ENCODE measurements at regions of chr6 and their contacts with region 1.

Region 1: GRCh38 chr6:71107911-71108420 is 151.1 kb upstream of the B3GAT2 start:
- DNase-seq: peak; percentile 29
- H3K4me3 ChIP-seq: no peak overlapping the region
- H3K27ac ChIP-seq: no peak overlapping the region
- H3K4me1 ChIP-seq: no peaks in the 10 kb centered on the region
- H3K27me3 ChIP-seq: peaks cover 14% of the 10 kb centered on the region
- CTCF ChIP-seq: no peak

Region 2: GRCh38 chr6:69917834-69918233 is 1190.1 kb before region 1 on chr6:
- CTCF ChIA-PET with region 1: no interaction called
- POLR2A ChIA-PET with region 1: interaction called, 13 read pairs
- intact Hi-C with region 1: no loop called
- DNase-seq: peak; percentile 93
- H3K4me3 ChIP-seq: no peak overlapping the region
- H3K27ac ChIP-seq: no peak overlapping the region
- H3K4me1 ChIP-seq: peaks cover 20% of the 10 kb centered on the region
- H3K27me3 ChIP-seq: no peaks in the 10 kb centered on the region
- CTCF ChIP-seq: no peak

Region 3: GRCh38 chr6:71124340-71124739 is 16.4 kb after region 1 on chr6:
- CTCF ChIA-PET with region 1: no interaction called
- POLR2A ChIA-PET with region 1: no interaction called
- intact Hi-C with region 1: no loop called
- DNase-seq: peak; percentile 93
- H3K4me3 ChIP-seq: no peak overlapping the region
- H3K27ac ChIP-seq: no peak overlapping the region
- H3K4me1 ChIP-seq: peaks cover 16% of the 10 kb centered on the region
- H3K27me3 ChIP-seq: peaks cover 43% of the 10 kb centered on the region
- CTCF ChIP-seq: no peak